ENCODE measurements at regions of chr13 and their contacts with region 1.

Region 1: DNA sequence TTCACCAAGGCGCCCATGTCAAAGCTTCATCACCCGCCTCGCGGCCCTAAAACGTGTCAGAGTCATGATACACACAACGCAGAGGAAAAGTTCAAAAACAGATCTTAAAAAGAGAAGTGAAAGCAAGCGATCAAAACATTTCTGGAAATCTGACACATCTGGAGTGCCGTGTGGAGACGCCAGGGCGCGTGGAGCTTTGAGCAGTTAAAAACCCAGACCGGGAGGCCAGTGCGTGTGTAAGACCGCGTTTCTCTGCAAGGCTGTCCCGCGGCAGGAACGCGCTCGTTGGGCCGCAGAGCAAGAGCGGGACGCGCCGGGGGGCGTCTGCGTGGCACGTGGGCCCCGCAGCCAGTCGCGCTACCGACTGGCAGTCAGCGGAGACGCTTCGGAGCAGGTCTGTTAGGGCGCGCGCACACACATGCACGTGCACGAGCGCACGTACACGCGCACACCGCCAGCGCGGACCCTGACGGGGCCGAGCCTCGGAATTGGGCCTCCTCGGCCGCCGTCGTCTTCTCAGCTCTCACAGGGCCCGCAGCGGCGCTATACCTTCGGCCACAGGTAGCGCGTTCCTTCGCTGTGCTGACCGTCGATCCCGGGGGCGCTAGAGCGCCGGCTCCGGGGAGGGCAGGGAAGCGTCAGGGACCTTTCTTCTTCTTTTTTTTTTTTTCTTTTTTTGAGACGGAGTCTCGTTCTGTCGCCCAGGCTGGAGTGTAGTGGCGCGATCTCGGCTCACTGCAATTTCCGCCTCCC is 35.8 kb downstream of the RNF6 start:
- DNase-seq: peak; percentile 92
- H3K4me3 ChIP-seq: peak overlapping the region; percentile 43 to 76 (median 60)
- H3K27ac ChIP-seq: peak overlapping the region; percentile 77 to 87 (median 78)
- H3K4me1 ChIP-seq: peaks cover 0 to 11% (median 8%) of the 10 kb centered on the region in 4 donors
- H3K27me3 ChIP-seq: no peaks in the 10 kb centered on the region
- CTCF ChIP-seq: peak in 2 of 4 experiments; percentile 9 to 27
- EP300 ChIP-seq: no peak
- POLR2A ChIP-seq: no peak

Region 2: GRCh38 chr13:25927932-25928331 is 258.4 kb before region 1 on chr13:
- intact Hi-C with region 1: no loop called
- DNase-seq: no peak
- H3K4me3 ChIP-seq: no peak overlapping the region
- H3K27ac ChIP-seq: no peak overlapping the region
- H3K4me1 ChIP-seq: peaks cover 0 to 8% (median under 1%) of the 10 kb centered on the region in 4 donors
- H3K27me3 ChIP-seq: no peaks in the 10 kb centered on the region
- CTCF ChIP-seq: no peak
- EP300 ChIP-seq: no peak
- POLR2A ChIP-seq: no peak

Region 3: GRCh38 chr13:25980255-25980654 is 206.0 kb before region 1 on chr13:
- intact Hi-C with region 1: no loop called
- DNase-seq: no peak
- H3K4me3 ChIP-seq: no peak overlapping the region
- H3K27ac ChIP-seq: no peak overlapping the region
- H3K4me1 ChIP-seq: no peaks in the 10 kb centered on the region
- H3K27me3 ChIP-seq: no peaks in the 10 kb centered on the region
- CTCF ChIP-seq: no peak
- EP300 ChIP-seq: no peak
- POLR2A ChIP-seq: no peak

Region 4: DNA sequence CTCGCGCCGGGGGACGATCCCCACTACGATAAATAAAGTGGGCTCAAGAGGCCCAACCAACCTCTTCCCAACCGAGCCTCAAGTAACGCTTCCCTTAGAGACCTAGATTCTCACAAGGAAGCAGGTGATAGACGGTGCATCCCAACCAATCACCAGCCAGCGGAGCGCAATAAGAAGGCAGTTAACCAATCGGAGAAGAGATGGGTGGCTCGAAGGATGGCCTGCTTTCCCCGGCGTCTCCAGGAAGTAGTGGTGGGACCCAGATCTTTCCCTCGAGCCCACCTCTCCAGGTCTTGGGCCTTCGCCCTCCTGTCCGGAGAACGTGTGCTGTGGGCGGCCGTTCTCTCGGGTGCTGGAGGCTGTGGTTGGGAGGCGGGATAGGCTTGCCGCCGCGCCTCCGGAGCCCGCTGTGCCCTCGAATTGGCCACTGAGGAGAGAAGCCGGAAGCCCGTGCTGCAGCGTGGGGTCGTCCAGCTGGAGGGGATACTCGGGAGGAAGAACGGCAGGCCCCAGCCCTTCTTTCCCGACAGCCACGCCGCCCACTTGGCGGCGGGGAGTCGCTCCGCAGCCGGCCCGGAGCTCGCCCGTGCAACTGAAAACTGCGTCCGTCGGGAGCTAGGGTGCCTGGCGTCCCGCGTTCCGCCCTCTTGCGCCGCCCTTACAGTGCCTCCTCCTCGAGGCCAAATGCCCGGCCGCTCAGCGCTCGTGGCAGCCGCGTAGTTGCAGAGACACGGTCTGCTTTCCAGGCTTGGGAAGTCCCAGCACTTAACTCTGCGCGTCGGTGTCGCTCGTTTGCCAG is 35.6 kb after region 1 on chr13 and contains the start of gene RNF6:
- intact Hi-C with region 1: loop called (anchors 2 kb)
- DNase-seq: peak; percentile 98
- H3K4me3 ChIP-seq: peak within 1 kb of the TSS; percentile 79 to 96 (median 92)
- H3K27ac ChIP-seq: peak within 1 kb of the TSS; percentile 95 to 98 (median 96)
- H3K4me1 ChIP-seq: peaks cover 0 to 26% (median 21%) of the 10 kb centered on the region in 4 donors
- H3K27me3 ChIP-seq: no peaks in the 10 kb centered on the region
- CTCF ChIP-seq: peak in 1 of 4 experiments; percentile 35
- EP300 ChIP-seq: no peak
- POLR2A ChIP-seq: peak in 1 of 2 donors; percentile 29
- total RNA-seq, gene RNF6: 11.9 to 27.1 (median 22.5) TPM

Region 5: GRCh38 chr13:26377038-26377437 is 190.7 kb after region 1 on chr13:
- intact Hi-C with region 1: loop called (anchors 5 kb)
- DNase-seq: no peak
- H3K4me3 ChIP-seq: no peak overlapping the region
- H3K27ac ChIP-seq: no peak overlapping the region
- H3K4me1 ChIP-seq: peaks cover 0 to 23% (median 5%) of the 10 kb centered on the region in 4 donors
- H3K27me3 ChIP-seq: no peaks in the 10 kb centered on the region
- CTCF ChIP-seq: peak in 2 of 4 experiments; percentile 37 to 43
- EP300 ChIP-seq: no peak
- POLR2A ChIP-seq: no peak

Region 6: DNA sequence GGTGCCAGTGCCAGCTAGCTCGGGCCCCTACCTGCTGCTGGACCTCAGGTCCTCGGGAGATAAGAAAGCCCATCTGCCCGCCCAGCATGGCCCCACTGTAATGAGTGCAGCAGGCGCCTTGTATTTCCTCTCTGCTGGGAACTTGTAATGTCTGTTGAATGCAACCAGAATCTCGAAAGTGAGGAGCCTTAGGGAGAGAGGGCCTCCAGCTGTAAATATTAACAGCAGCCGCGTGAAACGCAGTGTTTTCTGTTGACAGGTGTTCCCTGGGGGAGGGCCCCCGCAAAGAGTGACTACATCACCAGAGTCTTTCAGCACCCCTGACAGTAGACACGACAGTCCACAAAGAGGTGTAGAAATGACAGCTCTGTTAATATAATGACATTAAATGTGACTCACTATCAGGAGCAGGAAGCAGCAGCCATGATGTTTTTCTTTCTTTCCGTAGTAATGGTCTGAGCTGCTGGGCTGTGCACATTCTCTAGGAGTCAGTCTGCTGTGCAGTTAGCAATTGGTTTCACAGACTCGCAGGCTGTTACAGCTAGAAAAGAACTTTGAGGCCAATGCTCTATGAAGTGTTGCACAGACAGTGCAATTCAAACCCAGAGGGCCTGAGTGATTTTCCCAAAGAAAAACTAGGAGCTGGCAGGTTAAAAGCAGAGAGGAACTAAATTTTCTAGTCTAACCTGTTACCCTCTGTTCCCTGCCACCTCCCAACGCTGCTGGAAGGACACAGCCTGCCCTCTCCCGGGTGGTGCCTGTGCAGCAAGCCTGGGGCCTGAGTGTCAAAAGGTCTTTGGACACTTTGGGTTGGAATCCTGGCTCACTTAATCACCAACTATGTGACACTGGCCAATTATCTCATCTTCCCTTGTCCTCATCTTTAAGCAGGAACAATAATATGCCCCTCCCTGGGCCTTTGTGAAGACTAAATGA is 312.6 kb after region 1 on chr13:
- intact Hi-C with region 1: loop called (anchors 1 kb)
- DNase-seq: peak; percentile 47
- H3K4me3 ChIP-seq: no peak overlapping the region
- H3K27ac ChIP-seq: no peak overlapping the region
- H3K4me1 ChIP-seq: peaks cover 0 to 27% (median 19%) of the 10 kb centered on the region in 4 donors
- H3K27me3 ChIP-seq: no peaks in the 10 kb centered on the region
- CTCF ChIP-seq: no peak
- EP300 ChIP-seq: no peak
- POLR2A ChIP-seq: no peak

Region 7: DNA sequence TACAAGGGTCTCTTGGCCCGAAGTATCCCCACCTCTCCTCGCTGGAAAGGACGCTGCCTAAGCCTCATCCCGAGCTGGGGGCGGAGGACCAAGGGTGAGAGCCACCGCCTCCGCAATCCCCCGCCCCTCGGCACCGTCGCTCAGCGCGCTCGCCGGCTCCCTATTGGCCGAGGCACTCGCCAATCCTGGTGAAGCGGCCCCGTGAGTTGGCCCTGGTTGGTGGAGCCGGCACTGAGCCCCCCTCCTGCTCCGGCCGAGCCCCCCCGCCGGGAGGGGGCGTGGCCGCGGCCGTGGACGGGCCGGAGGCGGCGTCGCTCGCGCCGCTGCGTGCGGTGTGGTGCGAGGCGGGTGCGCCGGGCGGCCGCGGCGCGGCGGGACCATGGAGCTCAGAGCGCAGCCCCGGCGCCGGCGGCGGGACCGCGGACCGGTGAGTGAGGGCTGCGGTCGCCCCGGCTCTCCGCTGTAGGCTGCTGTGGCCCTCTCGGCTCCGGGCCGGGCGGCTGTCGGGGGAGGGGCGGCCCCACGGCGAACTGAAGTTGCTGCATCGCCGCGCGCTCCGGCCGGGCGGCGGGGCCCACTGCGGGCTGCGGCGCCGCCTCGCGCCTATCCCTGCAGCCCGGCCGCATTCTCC is 371.2 kb after region 1 on chr13 and contains the start of gene WASF3:
- intact Hi-C with region 1: loop called (anchors 10 kb)
- DNase-seq: peak; percentile 97
- H3K4me3 ChIP-seq: peak within 1 kb of the TSS; percentile 78 to 91 (median 84)
- H3K27ac ChIP-seq: peak within 1 kb of the TSS; percentile 59 to 83 (median 78)
- H3K4me1 ChIP-seq: peaks cover 0 to 15% (median 8%) of the 10 kb centered on the region in 4 donors
- H3K27me3 ChIP-seq: no peaks in the 10 kb centered on the region
- CTCF ChIP-seq: no peak
- EP300 ChIP-seq: no peak
- POLR2A ChIP-seq: no peak
- total RNA-seq, gene WASF3: 12.4 to 17.1 (median 14.6) TPM

Region 8: GRCh38 chr13:26698392-26699196 is 512.3 kb after region 1 on chr13:
- intact Hi-C with region 1: loop called (anchors 1 kb)
- DNase-seq: peak; percentile 91
- H3K4me3 ChIP-seq: peak overlapping the region in 1 of 4 donors; percentile 18
- H3K27ac ChIP-seq: no peak overlapping the region
- H3K4me1 ChIP-seq: no peaks in the 10 kb centered on the region
- H3K27me3 ChIP-seq: no peaks in the 10 kb centered on the region
- CTCF ChIP-seq: peak; percentile 83 to 95 (median 94)
- EP300 ChIP-seq: no peak
- POLR2A ChIP-seq: no peak